Activated naive CD4-positive, alpha-beta T cell treated with anti-CD3 and anti-CD28 coated beads for 36 hours (primary cell): ENCODE measurements at regions of chr2 and their contacts with region 1.

Region 1: DNA sequence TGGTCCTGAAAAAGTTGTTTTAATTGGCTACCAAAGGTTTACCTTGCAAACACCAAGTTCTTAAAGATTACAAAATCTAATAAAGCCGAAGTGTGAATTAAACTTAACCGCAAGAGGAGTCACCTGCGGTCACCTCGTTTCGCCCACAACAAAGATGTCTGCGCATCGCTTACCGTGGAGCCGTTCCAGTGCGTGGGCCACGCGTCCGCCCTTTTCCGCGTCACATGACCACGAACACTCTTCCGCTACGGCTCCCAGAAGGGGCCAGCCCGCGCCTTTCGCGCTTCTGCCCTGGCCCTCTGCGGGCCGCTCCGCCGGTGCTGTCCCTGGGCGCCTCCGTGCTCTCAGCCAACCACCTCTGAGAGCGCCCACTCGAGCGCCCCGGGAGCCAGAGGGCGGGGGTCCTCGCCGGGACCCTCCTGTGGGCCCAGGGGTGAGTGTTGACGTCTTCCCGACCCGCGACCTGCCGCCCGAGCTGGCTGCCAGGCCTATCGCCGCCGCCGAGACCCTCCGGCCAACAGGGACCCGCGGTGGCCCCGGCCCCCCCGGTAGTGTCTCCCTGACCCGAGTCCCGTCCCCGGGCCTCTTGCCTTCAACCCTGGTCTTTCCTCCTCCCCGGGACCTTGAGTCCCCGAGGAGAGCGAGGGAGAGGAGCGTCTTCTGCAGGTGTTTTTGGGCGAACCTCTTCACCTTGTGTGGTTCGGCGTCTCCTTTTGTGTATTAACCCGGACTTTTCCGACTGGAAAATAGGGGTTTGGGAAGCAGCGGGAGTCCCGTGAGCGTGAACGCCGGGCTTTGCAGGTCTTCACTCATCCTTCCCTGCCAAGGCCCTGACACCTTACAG is at the start of gene MFF:
- DNase-seq: peak; percentile 98
- H3K4me3 Mint-ChIP-seq: peak within 1 kb of the TSS; percentile 90
- H3K27ac Mint-ChIP-seq: peak within 1 kb of the TSS; percentile 88
- H3K4me1 Mint-ChIP-seq: peaks cover 24% of the 10 kb centered on the region
- H3K27me3 Mint-ChIP-seq: peaks cover 6% of the 10 kb centered on the region
- total RNA-seq, gene MFF: 82.1 to 82.2 TPM

Region 2: GRCh38 chr2:226791487-226792081 is 533.6 kb before region 1 on chr2:
- CTCF ChIA-PET with region 1: no interaction called
- intact Hi-C with region 1: loop called (anchors 2 kb)
- DNase-seq: peak; percentile 90
- H3K4me3 Mint-ChIP-seq: peak overlapping the region; percentile 83
- H3K27ac Mint-ChIP-seq: peak overlapping the region; percentile 95
- H3K4me1 Mint-ChIP-seq: peaks cover 37% of the 10 kb centered on the region
- H3K27me3 Mint-ChIP-seq: no peaks in the 10 kb centered on the region

Region 3: DNA sequence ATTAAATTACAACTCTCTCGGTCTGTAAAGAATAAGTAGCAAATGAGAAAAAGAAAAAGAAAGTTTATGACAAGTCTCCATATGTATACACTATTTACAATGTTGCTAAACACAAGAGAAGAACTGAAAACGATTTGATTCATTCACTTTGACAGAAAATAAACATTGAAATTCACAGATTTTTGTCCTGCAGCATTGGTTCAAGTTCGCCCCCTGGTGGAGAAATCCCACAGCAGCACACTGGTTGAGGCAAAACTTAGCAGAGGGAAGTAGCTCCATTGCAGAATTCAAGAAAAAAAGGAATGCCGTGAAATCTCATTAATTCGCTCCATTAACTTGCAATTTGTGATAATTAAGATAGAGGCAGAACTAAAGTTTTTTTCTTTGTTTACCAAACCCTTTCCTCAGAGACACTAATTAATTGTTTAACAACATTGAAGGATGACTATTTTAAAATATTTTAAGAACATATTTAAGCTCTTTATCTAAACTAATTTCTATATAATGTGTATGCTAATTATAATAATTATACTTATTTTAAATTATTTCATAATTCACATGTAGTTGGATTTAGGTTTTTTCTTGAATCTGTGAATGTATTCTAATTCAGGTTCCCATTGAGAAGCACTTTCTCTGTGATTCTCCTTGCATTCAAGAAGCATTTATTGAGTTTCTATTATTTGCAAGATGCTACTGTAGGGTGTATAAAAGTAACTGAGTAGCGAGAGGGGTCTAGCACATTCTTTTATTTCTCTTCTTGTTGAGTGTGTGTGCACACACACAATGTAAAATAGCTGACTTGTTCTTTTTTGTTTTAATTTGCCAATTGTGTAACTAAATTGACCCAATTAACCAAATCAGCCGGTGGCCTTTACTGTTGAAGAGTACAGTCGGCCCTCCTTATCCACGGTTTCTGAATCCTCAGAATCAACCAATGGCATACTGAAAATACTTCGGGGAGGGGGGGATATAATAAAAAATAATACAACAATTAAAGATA is 86.7 kb before region 1 on chr2:
- CTCF ChIA-PET with region 1: no interaction called
- intact Hi-C with region 1: loop called (anchors 1 kb)
- DNase-seq: peak; percentile 82
- H3K4me3 Mint-ChIP-seq: no peak overlapping the region
- H3K27ac Mint-ChIP-seq: no peak overlapping the region
- H3K4me1 Mint-ChIP-seq: no peaks in the 10 kb centered on the region
- H3K27me3 Mint-ChIP-seq: peaks cover 7% of the 10 kb centered on the region

Region 4: DNA sequence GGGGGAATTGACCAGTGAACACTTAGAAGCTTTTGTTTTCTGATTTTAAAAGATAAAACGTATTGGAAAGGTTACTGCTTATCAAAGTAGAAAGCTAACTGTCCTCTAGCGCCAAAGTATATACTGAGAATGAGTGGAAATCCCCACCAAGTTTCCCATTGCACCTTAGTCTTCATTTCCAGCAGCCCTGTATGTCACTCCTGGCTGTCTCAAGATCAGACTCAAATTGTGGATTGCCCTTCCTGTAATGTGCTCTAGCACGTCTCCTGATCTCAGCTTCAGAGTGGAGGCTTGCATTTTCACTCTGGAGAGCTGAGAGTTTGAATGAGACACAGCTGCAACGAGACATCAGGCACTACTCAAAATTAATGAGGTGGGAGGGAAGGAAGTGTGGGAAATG is 26.4 kb after region 1 on chr2:
- CTCF ChIA-PET with region 1: interaction called, 4 read pairs
- intact Hi-C with region 1: loop called (anchors 1 kb)
- DNase-seq: peak; percentile 45
- H3K4me3 Mint-ChIP-seq: peak overlapping the region; percentile 56
- H3K27ac Mint-ChIP-seq: peak overlapping the region; percentile 90
- H3K4me1 Mint-ChIP-seq: peaks cover 30% of the 10 kb centered on the region
- H3K27me3 Mint-ChIP-seq: no peaks in the 10 kb centered on the region

Region 5: GRCh38 chr2:227411320-227411989 is 86.2 kb after region 1 on chr2:
- CTCF ChIA-PET with region 1: interaction called, 3 read pairs
- intact Hi-C with region 1: loop called (anchors 1 kb)
- DNase-seq: peak; percentile 83
- H3K4me3 Mint-ChIP-seq: peak overlapping the region; percentile 51
- H3K27ac Mint-ChIP-seq: peak overlapping the region; percentile 96
- H3K4me1 Mint-ChIP-seq: peaks cover 76% of the 10 kb centered on the region
- H3K27me3 Mint-ChIP-seq: no peaks in the 10 kb centered on the region

Region 6: DNA sequence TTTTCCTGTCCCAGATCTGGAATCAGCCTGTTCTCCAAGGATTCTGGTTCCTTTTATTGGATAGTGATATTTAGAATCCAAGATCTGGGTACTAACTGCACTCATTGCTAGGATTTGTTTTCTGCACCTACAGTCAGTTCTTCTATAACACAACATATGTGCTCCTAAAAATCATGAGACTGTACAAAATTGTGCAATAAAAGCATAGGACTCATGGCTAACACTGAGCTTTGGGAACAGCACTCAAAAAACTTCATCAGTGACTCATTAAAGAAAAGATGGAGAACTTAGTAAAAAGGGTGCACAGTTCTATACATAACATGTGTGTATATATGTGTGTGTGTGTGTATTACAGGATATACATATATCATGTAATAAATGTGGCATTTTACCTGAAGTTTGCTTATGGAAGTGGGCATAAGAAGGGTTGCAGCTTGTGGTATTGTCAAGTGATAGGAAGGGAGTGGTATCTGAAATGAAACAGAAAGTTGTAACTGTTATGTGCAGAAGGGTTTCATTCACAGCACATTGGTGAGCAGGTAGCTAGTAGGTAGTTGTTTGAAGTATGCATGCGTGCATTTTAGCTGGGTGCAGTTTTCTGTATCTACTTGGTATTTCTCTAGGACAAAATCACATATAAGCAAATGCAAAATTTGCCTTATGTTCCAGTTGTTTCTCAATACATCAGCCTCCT is 267.6 kb after region 1 on chr2:
- CTCF ChIA-PET with region 1: no interaction called
- intact Hi-C with region 1: no loop called
- DNase-seq: no peak
- H3K4me3 Mint-ChIP-seq: no peak overlapping the region
- H3K27ac Mint-ChIP-seq: no peak overlapping the region
- H3K4me1 Mint-ChIP-seq: peaks cover 2% of the 10 kb centered on the region
- H3K27me3 Mint-ChIP-seq: peaks cover 33% of the 10 kb centered on the region